Common myeloid progenitor, CD34-positive (primary cell): ENCODE measurements at regions of chrX and their contacts with region 1.

Region 1: DNA sequence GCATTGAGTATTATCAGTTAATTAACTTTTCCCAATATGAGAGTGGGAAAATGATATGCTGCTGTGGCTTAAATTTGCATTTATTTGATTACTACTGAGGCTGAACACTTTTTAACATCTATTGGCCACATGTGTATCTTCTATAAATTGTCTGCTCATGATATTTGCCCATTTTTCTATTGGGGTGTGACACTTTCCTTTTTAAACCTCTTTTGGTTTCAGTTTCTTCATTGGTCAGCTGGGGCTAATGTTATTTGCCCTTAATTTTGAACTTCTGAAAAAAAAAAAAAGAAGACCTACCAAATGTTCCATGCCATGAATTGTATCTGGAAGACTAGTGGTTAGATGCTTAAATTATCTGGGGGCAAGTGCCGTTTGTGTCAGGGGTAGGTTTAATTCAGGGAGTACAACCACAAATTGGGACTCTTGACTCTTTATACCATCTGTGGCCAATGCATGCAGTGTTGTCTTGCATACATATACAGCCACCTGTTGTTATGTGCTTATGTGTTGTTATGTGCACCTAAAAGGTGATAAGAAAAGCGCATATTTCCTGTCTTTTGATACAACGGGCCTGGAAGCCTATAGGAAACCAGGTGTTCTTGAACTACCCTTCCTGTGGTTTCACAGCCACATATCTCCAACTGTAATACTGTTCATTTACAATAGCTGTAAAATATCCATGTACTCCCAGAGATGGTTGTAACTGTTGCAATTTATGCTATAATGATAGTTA is 49.0 kb downstream of the SH2D1A start:
- DNase-seq: peak in 1 of 3 donors; percentile 37
- H3K4me3 ChIP-seq: peak overlapping the region in 2 of 7 experiments; percentile 9 to 10
- H3K27ac ChIP-seq: no peak overlapping the region
- H3K4me1 ChIP-seq: peaks cover 0 to 11% (median 3%) of the 10 kb centered on the region in 4 experiments
- H3K27me3 ChIP-seq: no peaks in the 10 kb centered on the region

Region 2: DNA sequence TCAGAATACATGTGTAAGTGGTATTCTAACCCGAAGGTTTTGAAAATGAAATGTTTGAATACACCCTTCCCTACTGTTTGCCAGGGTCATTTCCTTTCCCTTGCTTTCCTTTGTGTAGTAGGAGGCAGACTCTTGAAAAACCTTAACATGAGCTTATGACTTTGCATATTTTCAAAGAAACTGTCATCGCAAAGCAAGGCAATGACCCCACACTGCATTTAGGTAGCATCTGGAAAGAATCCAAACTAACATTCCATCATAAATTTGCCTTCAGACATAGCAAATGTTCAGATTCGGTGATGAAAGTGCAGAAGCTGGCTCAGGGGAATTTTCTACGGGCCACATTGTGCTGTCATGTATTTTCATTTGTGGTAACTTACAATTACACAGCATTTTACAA is 16.7 kb before region 1 on chrX:
- CTCF ChIA-PET with region 1: no interaction called
- POLR2A ChIA-PET with region 1: no interaction called
- DNase-seq: peak; percentile 14 to 79 (median 78)
- H3K4me3 ChIP-seq: peak overlapping the region in 1 of 7 experiments; percentile 33
- H3K27ac ChIP-seq: peak overlapping the region in 1 of 2 experiments; percentile 62
- H3K4me1 ChIP-seq: peaks cover 8 to 43% (median 17%) of the 10 kb centered on the region in 4 experiments
- H3K27me3 ChIP-seq: no peaks in the 10 kb centered on the region

Region 3: DNA sequence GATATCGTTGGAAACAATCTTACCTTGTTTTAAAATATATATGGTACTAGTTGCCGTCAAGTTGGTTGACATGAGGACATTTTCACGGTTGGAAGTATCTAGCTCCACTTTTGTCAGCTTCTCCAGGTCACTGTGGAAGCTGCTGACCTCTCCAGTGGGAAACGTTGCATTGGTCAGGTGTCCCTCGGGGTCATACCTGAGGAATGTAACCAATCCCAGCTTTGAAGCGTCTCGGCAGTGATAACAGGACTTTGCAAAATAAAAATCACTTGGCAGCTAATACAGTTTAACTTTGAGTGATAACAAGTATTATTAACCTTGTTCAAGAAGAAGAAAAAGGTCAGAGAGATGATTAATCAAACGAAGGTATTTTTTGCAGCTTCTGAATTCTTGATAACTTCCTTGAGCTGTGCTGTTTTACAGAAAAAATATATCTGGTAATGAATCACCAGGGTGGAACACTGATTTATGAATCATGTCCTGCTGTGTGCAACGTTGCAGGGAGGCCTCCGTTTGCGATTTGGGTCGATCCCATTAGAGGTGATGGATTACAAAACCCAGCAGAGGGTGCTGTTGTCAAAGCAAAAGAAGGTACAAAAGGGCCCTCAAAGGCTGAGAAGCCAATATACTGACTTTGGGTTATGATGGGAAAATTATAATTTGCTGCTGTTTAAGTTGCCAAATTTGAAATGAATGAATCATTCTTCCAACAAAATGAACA is 11.1 kb after region 1 on chrX:
- CTCF ChIA-PET with region 1: interaction called, 12 read pairs
- POLR2A ChIA-PET with region 1: no interaction called
- DNase-seq: peak; percentile 58 to 82 (median 76)
- H3K4me3 ChIP-seq: no peak overlapping the region
- H3K27ac ChIP-seq: no peak overlapping the region
- H3K4me1 ChIP-seq: peaks cover 0 to 5% (median 4%) of the 10 kb centered on the region in 4 experiments
- H3K27me3 ChIP-seq: no peaks in the 10 kb centered on the region

Region 4: DNA sequence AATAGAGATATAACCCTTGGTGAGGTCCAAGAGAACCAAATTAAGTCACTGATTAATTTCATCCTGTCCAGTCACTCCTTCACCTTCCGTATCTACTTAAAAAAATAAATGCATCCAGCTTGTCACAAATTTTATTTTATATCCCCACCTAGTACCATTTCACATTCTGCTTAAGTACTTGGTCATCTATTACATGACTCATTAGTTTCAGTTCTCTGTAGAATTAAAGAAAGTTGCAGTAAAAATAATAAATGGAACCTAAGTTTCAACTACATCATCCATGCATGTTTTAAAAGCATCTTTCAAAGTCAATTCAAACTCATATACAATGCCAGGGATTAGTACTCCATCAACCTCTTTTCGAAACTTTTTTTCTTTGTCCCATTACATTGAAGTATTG is 81.2 kb after region 1 on chrX:
- CTCF ChIA-PET with region 1: no interaction called
- POLR2A ChIA-PET with region 1: no interaction called
- DNase-seq: no peak
- H3K4me3 ChIP-seq: no peak overlapping the region
- H3K27ac ChIP-seq: no peak overlapping the region
- H3K4me1 ChIP-seq: no peaks in the 10 kb centered on the region
- H3K27me3 ChIP-seq: peaks cover 0 to 3% (median 0%) of the 10 kb centered on the region in 5 experiments

Region 5: GRCh38 chrX:124573468-124573867 is 178.2 kb after region 1 on chrX:
- CTCF ChIA-PET with region 1: no interaction called
- POLR2A ChIA-PET with region 1: no interaction called
- DNase-seq: no peak
- H3K4me3 ChIP-seq: no peak overlapping the region
- H3K27ac ChIP-seq: no peak overlapping the region
- H3K4me1 ChIP-seq: no peaks in the 10 kb centered on the region
- H3K27me3 ChIP-seq: no peaks in the 10 kb centered on the region